Stomach (tissue), 19 donors: ENCODE measurements at regions of chr11 and their contacts with region 1.

Region 1: DNA sequence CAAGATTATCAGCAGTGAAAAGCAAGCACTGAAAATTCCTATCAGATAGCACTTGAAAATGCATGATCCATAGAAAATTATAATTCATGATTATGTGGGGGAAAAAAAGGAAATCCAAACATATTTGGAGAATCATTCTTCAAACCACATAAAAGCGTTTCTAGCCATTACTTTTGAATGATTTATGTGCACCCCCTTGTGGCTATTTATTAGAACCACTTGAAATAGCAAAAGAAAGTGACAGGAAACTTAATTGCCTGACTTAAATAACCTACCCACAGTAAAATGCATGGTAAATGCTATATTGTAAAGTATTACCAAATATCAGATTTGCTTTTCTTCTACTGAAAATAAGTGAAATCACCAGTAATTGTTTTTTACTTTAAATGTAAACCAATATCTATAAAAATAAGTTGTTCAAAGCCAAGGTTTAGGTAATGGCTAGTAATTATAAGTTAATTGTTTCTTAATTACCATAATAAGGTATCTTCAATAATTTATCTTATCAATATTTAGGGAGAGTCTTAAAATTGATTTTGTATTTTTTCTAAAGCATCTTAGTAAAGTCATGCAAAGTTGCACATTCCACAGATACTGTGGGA is 168.5 kb downstream of the ARHGAP42 start:
- DNase-seq: peak in 1 of 2 donors; percentile 74
- H3K4me3 ChIP-seq: no peak overlapping the region
- H3K27ac ChIP-seq: peak overlapping the region in 1 of 5 donors; percentile 35
- H3K4me1 ChIP-seq: peaks cover 10 to 36% (median 16%) of the 10 kb centered on the region in 4 donors
- H3K27me3 ChIP-seq: no peaks in the 10 kb centered on the region
- CTCF ChIP-seq: peak in 4 of 7 experiments; percentile 29 to 75 (median 62)
- EP300 ChIP-seq: no peak
- POLR2A ChIP-seq: no peak

Region 2: DNA sequence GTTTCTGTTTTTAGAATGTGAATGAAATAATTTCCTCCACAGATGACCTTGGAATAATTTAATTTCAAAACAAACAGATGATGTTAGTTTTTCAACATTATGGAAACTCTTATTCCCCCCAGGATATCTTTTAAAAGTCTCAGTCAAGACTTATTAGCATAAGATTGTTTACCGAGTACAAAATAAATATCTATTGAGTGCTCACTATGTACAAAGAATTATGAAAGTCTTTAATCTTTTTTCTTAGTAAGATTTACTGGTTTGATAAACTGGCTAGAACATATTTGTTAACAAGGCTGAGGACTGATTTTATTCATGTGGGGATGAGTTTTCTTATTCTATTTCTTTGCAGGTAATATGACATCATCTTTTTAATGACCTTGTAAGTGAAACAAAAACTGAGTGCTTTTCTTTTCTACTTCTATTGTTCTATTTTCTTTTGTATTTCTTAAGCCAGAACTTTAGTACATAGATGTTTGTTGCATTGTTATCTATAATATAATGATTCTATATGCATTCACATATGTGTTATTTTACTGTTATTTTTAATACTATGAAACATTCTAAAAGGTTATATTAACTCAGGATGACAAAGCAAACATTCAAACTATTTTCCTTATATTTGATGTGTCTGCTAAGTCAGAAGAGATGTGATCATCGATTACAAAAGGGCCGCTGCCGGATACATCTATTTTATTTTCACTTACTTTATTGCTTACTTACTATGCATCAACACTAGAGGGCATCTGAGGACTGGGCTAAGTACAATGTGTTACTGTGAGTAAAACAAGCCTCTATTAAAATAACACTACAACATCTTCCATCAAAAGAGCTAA is 279.5 kb before region 1 on chr11:
- intact Hi-C with region 1: loop called (anchors 5 kb)
- DNase-seq: peak in 1 of 2 donors; percentile 83
- H3K4me3 ChIP-seq: no peak overlapping the region
- H3K27ac ChIP-seq: no peak overlapping the region
- H3K4me1 ChIP-seq: peaks cover 0 to 6% (median 3%) of the 10 kb centered on the region in 4 donors
- H3K27me3 ChIP-seq: no peaks in the 10 kb centered on the region
- CTCF ChIP-seq: peak in 5 of 7 experiments; percentile 46 to 76 (median 68)
- EP300 ChIP-seq: no peak
- POLR2A ChIP-seq: no peak

Region 3: GRCh38 chr11:100687630-100688395 is 167.8 kb before region 1 on chr11:
- intact Hi-C with region 1: loop called (anchors 10 kb)
- DNase-seq: peak; percentile 48 to 91
- H3K4me3 ChIP-seq: peak overlapping the region; percentile 74 to 77 (median 76)
- H3K27ac ChIP-seq: peak overlapping the region; percentile 75 to 96 (median 88)
- H3K4me1 ChIP-seq: peaks cover 6 to 75% (median 33%) of the 10 kb centered on the region in 4 donors
- H3K27me3 ChIP-seq: peaks cover 0 to 7% (median 0%) of the 10 kb centered on the region in 3 donors
- CTCF ChIP-seq: peak in 5 of 7 experiments; percentile 47 to 69 (median 57)
- EP300 ChIP-seq: no peak
- POLR2A ChIP-seq: peak in 1 of 4 donors; percentile 21